ENCODE measurements at regions of chr12 and their contacts with region 1.

Region 1: DNA sequence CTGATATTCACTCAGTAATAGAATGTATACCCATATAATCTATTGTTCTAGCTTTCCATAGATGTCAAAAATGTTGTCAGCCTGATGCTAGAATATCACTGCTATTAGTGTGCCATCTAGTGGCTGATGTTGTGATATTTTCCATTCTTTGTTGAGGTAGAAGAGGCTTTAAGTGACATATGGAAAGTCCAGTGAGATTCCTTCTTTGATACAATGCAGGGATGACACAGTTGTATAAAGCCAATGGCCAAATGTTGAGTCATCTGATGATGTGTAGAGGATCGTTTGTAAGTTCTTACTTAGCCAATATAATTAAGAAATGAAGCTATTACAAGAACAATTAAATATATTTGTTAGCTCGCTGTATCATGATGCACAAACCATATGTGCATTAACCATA is 58.1 kb upstream of the PCED1B start:
- DNase-seq: no peak
- H3K4me3 Mint-ChIP-seq: no peak overlapping the region
- H3K27ac Mint-ChIP-seq: no peak overlapping the region
- H3K4me1 Mint-ChIP-seq: no peaks in the 10 kb centered on the region
- H3K27me3 Mint-ChIP-seq: peaks cover 21% of the 10 kb centered on the region

Region 2: DNA sequence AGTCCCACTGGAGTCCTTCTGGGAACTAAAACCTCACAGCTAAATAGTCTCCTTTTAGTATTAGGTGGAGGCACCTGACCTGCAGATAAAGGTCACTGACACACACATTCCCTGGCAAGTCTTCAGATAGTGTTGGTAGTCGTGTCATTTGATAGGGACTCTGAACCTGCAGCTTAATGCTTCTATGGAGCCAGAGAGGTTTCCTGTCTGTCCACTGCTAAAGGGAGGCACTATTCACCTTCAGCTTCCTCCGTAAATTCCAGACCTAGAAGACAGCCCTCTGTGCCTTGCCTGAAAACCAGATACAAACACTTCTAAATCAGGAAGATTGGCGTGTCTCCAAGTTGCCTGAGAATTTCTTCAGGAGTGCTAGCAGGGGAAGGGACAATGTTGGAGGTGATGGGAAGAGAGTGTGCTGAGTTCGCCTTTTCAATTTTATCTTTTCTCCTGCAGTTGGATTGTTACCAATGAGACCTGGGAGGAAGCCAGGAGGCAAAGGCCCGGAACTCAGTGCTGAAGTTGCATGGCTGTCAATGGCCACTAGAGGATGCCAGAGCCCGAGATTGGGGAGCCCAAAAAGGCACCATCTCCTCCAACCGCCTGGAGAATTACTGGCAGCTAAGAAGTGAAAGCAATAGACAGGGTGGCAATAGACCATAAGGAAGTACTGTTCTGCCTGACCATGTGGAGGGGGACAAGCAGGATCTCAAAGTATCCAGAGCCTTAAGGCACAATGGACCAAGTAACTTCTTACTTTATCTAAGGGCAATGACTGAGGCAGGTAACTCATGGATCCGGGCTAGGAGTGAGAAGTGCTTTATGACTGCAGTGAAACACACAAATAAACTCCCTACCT is 949.3 kb before region 1 on chr12:
- CTCF ChIA-PET with region 1: interaction called, 11 read pairs
- DNase-seq: peak; percentile 70
- H3K4me3 Mint-ChIP-seq: no peak overlapping the region
- H3K27ac Mint-ChIP-seq: no peak overlapping the region
- H3K4me1 Mint-ChIP-seq: peaks cover 20% of the 10 kb centered on the region
- H3K27me3 Mint-ChIP-seq: no peaks in the 10 kb centered on the region

Measured in activated naive CD4-positive, alpha-beta T cell treated with anti-CD3 and anti-CD28 coated beads, Interleukin-2, amount 10 ng/mL, durations not matched to agents 7 days and 5 days (primary cell).